GM10248 (cell line): ENCODE measurements at regions of chr11 and their contacts with region 1.

Region 1: GRCh38 chr11:34180040-34180813 is 74.8 kb downstream of the NAT10 start:
- DNase-seq: peak; percentile 53
- CTCF ChIP-seq: no peak

Region 2: DNA sequence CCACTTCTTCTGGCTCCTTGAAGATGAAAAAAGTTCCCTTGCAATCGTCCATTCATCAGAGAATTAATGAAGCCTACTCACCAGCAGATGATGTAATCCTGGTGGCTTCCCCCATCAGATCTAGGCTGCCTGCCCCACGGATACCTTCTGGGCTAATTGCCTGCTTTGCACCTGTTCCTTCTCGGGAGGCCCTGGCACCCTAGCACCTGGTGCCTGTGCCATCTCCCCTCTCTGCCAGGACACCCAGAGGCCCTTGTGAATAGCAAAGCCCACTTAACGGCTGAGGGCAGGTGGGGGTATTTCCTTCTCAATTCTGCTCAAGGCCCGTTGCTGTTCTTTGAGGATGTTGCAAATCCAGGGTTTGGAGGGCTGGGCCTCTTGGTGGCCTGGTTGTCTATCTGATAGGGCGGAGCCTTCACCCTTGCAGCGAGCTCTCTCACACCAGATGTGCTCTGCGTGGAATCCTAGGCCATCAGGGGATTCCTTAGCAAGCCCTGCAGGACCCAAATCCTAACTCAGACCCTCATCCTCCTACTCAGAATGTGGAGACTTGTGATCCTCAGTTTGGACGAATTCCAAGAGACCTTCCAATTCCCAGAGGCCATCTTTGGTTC is 288.4 kb before region 1 on chr11 and contains the start of gene LMO2:
- CTCF ChIA-PET with region 1: no interaction called
- POLR2A ChIA-PET with region 1: no interaction called
- DNase-seq: no peak
- CTCF ChIP-seq: no peak

Region 3: GRCh38 chr11:34191578-34191977 is 11.4 kb after region 1 on chr11:
- CTCF ChIA-PET with region 1: interaction called, 57 read pairs
- POLR2A ChIA-PET with region 1: interaction called, 4 read pairs
- DNase-seq: no peak
- CTCF ChIP-seq: no peak

Region 4: GRCh38 chr11:34357701-34358257 is 177.6 kb after region 1 on chr11 and contains the start of gene ABTB2:
- CTCF ChIA-PET with region 1: interaction called, 121 read pairs
- POLR2A ChIA-PET with region 1: interaction called, 6 read pairs
- DNase-seq: peak; percentile 96
- CTCF ChIP-seq: no peak